ENCODE measurements at regions of chr6 and their contacts with region 1.

Region 1: DNA sequence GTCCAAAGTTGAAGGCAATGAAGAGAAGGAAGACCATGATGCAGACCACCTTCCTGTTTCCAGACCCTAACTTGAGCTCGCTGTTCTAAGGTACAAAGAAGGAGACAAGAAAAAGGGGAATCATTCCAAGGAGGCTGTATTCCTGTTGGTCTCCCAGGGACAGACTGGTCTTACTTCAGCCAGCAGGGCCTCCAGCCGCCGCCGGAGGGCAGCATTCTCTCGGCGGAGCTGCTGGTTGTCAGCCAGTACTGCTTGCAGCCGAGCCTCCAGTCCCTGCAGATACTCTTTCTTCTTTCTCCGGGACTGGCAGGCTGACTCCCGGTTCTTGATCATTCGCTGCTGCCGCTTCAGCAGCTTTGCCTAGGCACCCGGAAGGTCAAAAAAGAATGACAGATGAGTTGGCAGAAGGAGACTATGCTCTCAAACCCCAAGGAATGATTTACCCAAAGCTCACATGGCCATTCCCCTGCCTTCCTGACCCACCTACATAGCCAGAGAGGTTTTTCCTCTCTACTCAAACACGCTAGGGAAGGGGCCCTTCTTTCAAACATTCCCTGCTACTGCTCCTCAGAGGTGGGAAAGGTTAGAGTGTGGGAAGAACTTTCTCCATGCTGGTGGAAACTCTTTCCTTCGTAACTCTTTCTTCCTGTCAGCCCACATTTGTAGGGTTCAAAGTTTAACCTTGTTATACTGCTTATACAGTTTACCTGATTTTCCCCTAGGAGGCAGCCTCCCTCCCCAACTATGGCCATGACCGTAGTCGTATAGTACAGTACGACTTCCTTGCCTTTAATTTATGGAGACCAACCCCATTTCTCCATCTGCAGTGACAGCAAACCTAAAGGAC is 9.0 kb downstream of the ATF6B start:
- DNase-seq: peak; percentile 86 to 93 (median 88)
- ATAC-seq: peak; percentile 96
- H3K4me3 ChIP-seq: no peak overlapping the region
- H3K27ac ChIP-seq: peak overlapping the region; percentile 43; the same call in 2 of the 3 replicates
- H3K4me1 ChIP-seq: peaks cover 7 to 8% of the 10 kb centered on the region in 2 experiments; a peak in 4 of 5 replicates
- H3K27me3 ChIP-seq: no peaks in the 10 kb centered on the region
- CTCF ChIP-seq: peak; percentile 98
- EP300 ChIP-seq: 0 out of 2 replicates have a peak, but pooled peaks have one; percentile 7
- POLR2A ChIP-seq: no peak
- RAD21 ChIP-seq: peak; percentile 98 to 99

Region 2: DNA sequence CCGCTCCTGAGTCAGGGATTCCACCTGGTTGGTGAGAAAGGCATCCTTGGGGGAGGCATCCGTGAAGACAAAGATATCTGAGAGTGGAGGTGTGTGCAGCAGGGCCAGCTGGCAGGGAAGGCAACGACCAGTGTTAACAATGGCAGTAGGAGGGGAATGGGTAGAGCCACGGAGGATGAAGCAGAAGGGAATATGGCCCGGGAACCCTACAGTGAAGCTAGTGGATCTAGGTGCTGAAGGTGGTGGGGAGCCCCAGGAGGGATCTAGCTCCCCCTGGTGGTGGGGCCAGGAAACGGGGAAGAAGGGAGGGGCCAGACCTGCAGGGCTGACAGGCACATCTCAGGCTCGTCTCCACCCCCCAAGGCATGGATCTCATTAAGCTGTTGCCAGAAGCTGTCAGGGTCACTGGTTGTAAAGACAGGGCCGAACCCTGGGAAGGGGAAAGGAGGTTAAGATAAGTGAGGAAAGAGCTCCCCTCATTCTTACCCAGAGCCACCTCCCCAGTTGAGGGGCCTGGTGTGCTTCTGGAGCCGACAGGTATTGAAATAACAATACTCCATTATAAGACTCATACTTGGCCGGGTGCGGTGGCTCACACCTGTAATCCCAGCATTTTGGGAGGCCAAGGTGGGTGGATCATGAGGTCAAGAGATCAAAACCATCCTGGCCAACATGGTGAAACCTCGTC is 349.2 kb before region 1 on chr6:
- CTCF ChIA-PET with region 1: no interaction called
- POLR2A ChIA-PET with region 1: no interaction called
- in situ Hi-C with region 1: no loop called
- intact Hi-C with region 1: no loop called
- DNase-seq: peak; percentile 98 to 100 (median 100)
- ATAC-seq: peak; percentile 91
- H3K4me3 ChIP-seq: no peak overlapping the region
- H3K27ac ChIP-seq: peak overlapping the region; percentile 26; the same call in 2 of the 3 replicates
- H3K4me1 ChIP-seq: peaks cover 24 to 68% of the 10 kb centered on the region in 2 experiments
- H3K27me3 ChIP-seq: no peaks in the 10 kb centered on the region
- CTCF ChIP-seq: peak; percentile 98 to 100 (median 99)
- EP300 ChIP-seq: peak; percentile 28
- POLR2A ChIP-seq: no peak
- RAD21 ChIP-seq: peak; percentile 99 to 100

Region 3: GRCh38 chr6:32108094-32108627 is 10.8 kb before region 1 on chr6:
- CTCF ChIA-PET with region 1: no interaction called
- POLR2A ChIA-PET with region 1: interaction called, 25 read pairs
- in situ Hi-C with region 1: no loop called
- intact Hi-C with region 1: no loop called
- DNase-seq: peak; percentile 66 to 75 (median 71)
- ATAC-seq: peak; percentile 52
- H3K4me3 ChIP-seq: no peak overlapping the region
- H3K27ac ChIP-seq: no peak overlapping the region
- H3K4me1 ChIP-seq: peaks cover 29 to 38% of the 10 kb centered on the region in 2 experiments
- H3K27me3 ChIP-seq: peaks cover 0 to 26% of the 10 kb centered on the region in 2 experiments; a peak in 2 of 5 replicates
- CTCF ChIP-seq: no peak
- EP300 ChIP-seq: no peak
- POLR2A ChIP-seq: no peak
- RAD21 ChIP-seq: no peak

Region 4: GRCh38 chr6:32166411-32167061 is 47.5 kb after region 1 on chr6:
- CTCF ChIA-PET with region 1: no interaction called
- POLR2A ChIA-PET with region 1: interaction called, 4 read pairs
- in situ Hi-C with region 1: no loop called
- intact Hi-C with region 1: loop called (anchors 5 kb)
- DNase-seq: peak; percentile 69 to 77 (median 70)
- ATAC-seq: peak; percentile 62
- H3K4me3 ChIP-seq: no peak overlapping the region
- H3K27ac ChIP-seq: 0 out of 3 replicates have a peak overlapping the region, but pooled peaks have one; percentile 10
- H3K4me1 ChIP-seq: peaks cover 44 to 51% of the 10 kb centered on the region in 2 experiments
- H3K27me3 ChIP-seq: no peaks in the 10 kb centered on the region
- CTCF ChIP-seq: peak; percentile 40 to 59 (median 58)
- EP300 ChIP-seq: no peak
- POLR2A ChIP-seq: no peak; the same call in 1 of the 2 replicates
- RAD21 ChIP-seq: peak in 1 of 2 experiments; percentile 35; a peak in 3 of 4 replicates

Region 5: GRCh38 chr6:32195652-32195901 is 76.6 kb after region 1 on chr6:
- CTCF ChIA-PET with region 1: interaction called, 6 read pairs
- POLR2A ChIA-PET with region 1: interaction called, 3 read pairs
- in situ Hi-C with region 1: no loop called
- intact Hi-C with region 1: loop called (anchors 1 kb)
- DNase-seq: peak; percentile 96 to 100 (median 97)
- ATAC-seq: peak; percentile 91
- H3K4me3 ChIP-seq: peak overlapping the region; percentile 63
- H3K27ac ChIP-seq: no peak overlapping the region
- H3K4me1 ChIP-seq: peaks cover 60 to 61% of the 10 kb centered on the region in 2 experiments
- H3K27me3 ChIP-seq: no peaks in the 10 kb centered on the region; a peak in 1 of 5 replicates
- CTCF ChIP-seq: peak; percentile 39 to 75 (median 63); a peak in 5 of 6 replicates
- EP300 ChIP-seq: 0 out of 2 replicates have a peak, but pooled peaks have one; percentile 2
- POLR2A ChIP-seq: no peak
- RAD21 ChIP-seq: no peak

Region 6: DNA sequence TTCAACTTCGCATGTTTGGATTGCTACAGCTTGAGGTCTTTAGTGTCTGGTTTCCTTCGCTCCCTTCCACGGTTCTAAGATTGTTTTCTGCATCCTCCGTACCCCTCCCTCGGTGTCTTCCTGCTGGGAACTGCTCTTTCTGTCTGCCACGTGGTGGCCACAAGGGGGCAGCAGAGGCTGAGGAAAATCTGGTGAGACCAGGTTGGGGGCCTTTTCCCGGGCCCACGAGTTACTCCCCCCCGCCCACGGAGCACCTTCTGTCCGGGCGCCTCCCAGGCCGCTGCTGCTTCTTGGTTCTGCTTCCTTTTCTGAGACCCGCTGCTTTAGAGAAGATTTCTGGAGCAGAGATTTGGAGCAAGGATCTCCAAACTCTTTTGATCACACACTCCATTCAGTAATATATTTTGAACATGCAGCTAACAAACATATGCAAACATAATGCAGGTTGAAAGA is 126.0 kb after region 1 on chr6:
- CTCF ChIA-PET with region 1: no interaction called
- POLR2A ChIA-PET with region 1: interaction called, 3 read pairs
- in situ Hi-C with region 1: no loop called
- intact Hi-C with region 1: loop called (anchors 2 kb)
- DNase-seq: peak; percentile 90 to 97 (median 96)
- ATAC-seq: peak; percentile 97
- H3K4me3 ChIP-seq: no peak overlapping the region
- H3K27ac ChIP-seq: no peak overlapping the region
- H3K4me1 ChIP-seq: no peaks in the 10 kb centered on the region
- H3K27me3 ChIP-seq: peaks cover 5 to 13% of the 10 kb centered on the region in 2 experiments; a peak in 4 of 5 replicates
- CTCF ChIP-seq: peak; percentile 91 to 95 (median 95)
- EP300 ChIP-seq: peak; percentile 37; the same call in 1 of the 2 replicates
- POLR2A ChIP-seq: no peak
- RAD21 ChIP-seq: peak; percentile 87 to 90

Region 7: GRCh38 chr6:32700391-32701040 is 581.5 kb after region 1 on chr6:
- CTCF ChIA-PET with region 1: no interaction called
- POLR2A ChIA-PET with region 1: no interaction called
- in situ Hi-C with region 1: no loop called
- intact Hi-C with region 1: loop called (anchors 2 kb)
- DNase-seq: peak; percentile 19 to 72 (median 40)
- ATAC-seq: peak; percentile 82
- H3K4me3 ChIP-seq: no peak overlapping the region
- H3K27ac ChIP-seq: no peak overlapping the region
- H3K4me1 ChIP-seq: no peaks in the 10 kb centered on the region
- H3K27me3 ChIP-seq: peaks cover 0 to 9% of the 10 kb centered on the region in 2 experiments; a peak in 2 of 5 replicates
- CTCF ChIP-seq: peak; percentile 66 to 81 (median 78)
- EP300 ChIP-seq: no peak
- POLR2A ChIP-seq: no peak
- RAD21 ChIP-seq: peak; percentile 80 to 84

Measured in K562 (cell line).